Heart right ventricle (tissue), 16 donors: ENCODE measurements at regions of chr5 and their contacts with region 1.

Region 1: GRCh38 chr5:57499262-57500050 is 16.8 kb upstream of the ACTBL2 start:
- DNase-seq: peak in 1 of 2 donors; percentile 31
- ATAC-seq: peak in 7 of 8 donors; percentile 50 to 82 (median 68)
- H3K4me3 ChIP-seq: peak overlapping the region in 7 of 10 donors; percentile 8 to 41 (median 31)
- H3K27ac ChIP-seq: peak overlapping the region in 4 of 10 donors; percentile 0 to 70 (median 33)
- H3K4me1 ChIP-seq: peaks cover 0 to 49% (median 33%) of the 10 kb centered on the region in 9 donors
- H3K27me3 ChIP-seq: no peaks in the 10 kb centered on the region
- CTCF ChIP-seq: peak; percentile 59 to 87 (median 76)

Region 2: GRCh38 chr5:57298295-57298984 is 201.0 kb before region 1 on chr5:
- intact Hi-C with region 1: loop called in 9 of 10 experiments (anchors 2 to 10 kb)
- DNase-seq: peak; percentile 41 to 91
- ATAC-seq: peak; percentile 81 to 95 (median 92)
- H3K4me3 ChIP-seq: peak overlapping the region in 6 of 10 donors; percentile 0 to 37 (median 17)
- H3K27ac ChIP-seq: peak overlapping the region in 5 of 10 donors; percentile 18 to 58 (median 23)
- H3K4me1 ChIP-seq: peaks cover 3 to 13% (median 8%) of the 10 kb centered on the region in 9 donors
- H3K27me3 ChIP-seq: no peaks in the 10 kb centered on the region
- CTCF ChIP-seq: peak; percentile 74 to 89 (median 85)

Region 3: GRCh38 chr5:57435701-57436134 is 63.7 kb before region 1 on chr5:
- intact Hi-C with region 1: no loop called
- DNase-seq: no peak
- ATAC-seq: peak in 2 of 8 donors; percentile 46 to 51
- H3K4me3 ChIP-seq: no peak overlapping the region
- H3K27ac ChIP-seq: no peak overlapping the region
- H3K4me1 ChIP-seq: peaks cover 0 to 28% (median 4%) of the 10 kb centered on the region in 9 donors
- H3K27me3 ChIP-seq: no peaks in the 10 kb centered on the region
- CTCF ChIP-seq: no peak

Region 4: DNA sequence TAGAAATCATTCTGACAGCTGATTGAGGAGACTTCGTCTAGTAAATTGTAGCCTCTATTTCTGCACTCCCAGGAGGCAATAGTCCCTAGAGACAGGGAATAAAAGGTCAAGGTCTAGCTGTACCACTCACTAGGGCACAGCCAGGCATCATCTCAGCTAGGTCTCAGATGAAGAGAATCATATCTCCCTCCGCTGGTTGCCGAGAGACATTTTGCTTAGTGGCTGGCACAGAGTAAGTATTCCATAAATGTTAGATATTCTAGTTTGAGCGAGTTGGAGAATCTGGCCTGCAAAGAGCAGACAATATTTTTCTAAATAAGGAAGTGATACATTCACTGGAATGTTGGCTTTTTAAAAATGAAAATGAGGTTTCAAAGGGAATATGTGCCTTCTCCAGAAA is 163.5 kb after region 1 on chr5:
- intact Hi-C with region 1: loop called in 4 of 10 experiments (anchors 5 to 10 kb)
- DNase-seq: peak in 1 of 2 donors; percentile 45
- ATAC-seq: peak; percentile 80 to 95 (median 86)
- H3K4me3 ChIP-seq: no peak overlapping the region
- H3K27ac ChIP-seq: peak overlapping the region in 8 of 10 donors; percentile 24 to 89 (median 76)
- H3K4me1 ChIP-seq: peaks cover 0 to 30% (median 3%) of the 10 kb centered on the region in 9 donors
- H3K27me3 ChIP-seq: no peaks in the 10 kb centered on the region
- CTCF ChIP-seq: peak in 4 of 9 donors; percentile 5 to 40 (median 31)

Region 5: GRCh38 chr5:57692582-57693487 is 193.4 kb after region 1 on chr5:
- intact Hi-C with region 1: loop called in 2 of 10 experiments (anchors 10 kb)
- DNase-seq: peak; percentile 55 to 74
- ATAC-seq: peak; percentile 66 to 97 (median 82)
- H3K4me3 ChIP-seq: no peak overlapping the region
- H3K27ac ChIP-seq: peak overlapping the region in 9 of 10 donors; percentile 1 to 89 (median 70)
- H3K4me1 ChIP-seq: peaks cover 5 to 60% (median 40%) of the 10 kb centered on the region in 9 donors
- H3K27me3 ChIP-seq: no peaks in the 10 kb centered on the region
- CTCF ChIP-seq: no peak

Region 6: GRCh38 chr5:57761491-57761890 is 262.0 kb after region 1 on chr5:
- intact Hi-C with region 1: loop called in 1 of 10 experiments (anchors 10 kb)
- DNase-seq: no peak
- ATAC-seq: no peak
- H3K4me3 ChIP-seq: no peak overlapping the region
- H3K27ac ChIP-seq: no peak overlapping the region
- H3K4me1 ChIP-seq: no peaks in the 10 kb centered on the region
- H3K27me3 ChIP-seq: no peaks in the 10 kb centered on the region
- CTCF ChIP-seq: no peak

Region 7: DNA sequence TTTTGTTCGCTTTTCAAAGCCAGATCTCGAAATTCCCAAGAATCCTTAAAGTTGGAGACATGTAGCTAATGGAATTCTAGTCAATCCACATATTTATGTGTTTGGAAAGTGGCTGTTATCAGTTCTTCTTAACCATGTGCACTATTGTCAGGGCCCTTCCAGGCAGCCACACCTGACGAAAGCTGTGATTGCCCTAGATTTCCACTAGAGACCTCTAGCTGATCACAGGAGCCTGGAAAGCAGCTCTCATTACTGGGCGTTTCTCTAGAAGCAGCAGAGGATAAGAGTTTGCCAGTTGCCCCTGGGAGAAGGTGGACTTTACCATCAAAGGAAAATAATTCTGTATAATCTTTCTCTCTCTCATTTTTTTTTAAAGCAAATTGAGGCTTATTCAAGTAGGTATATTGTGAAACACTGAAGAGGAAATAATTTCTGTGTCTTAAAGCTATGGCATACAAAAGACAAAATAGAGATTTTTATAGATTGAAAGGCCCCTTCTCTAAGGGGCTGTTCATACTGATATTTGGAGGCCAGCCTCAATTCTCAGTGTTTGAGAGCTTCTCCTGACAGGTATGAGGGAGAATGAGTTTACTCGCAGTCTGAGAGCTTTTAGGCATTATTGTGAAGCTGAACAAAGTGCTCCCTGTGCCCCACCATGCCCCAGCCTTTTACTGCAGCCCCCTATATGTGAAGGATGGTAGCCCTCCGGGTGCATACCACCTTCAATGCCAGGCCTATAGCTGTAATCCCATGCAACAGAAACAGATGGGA is 388.6 kb after region 1 on chr5:
- intact Hi-C with region 1: loop called in 8 of 10 experiments (anchors 5 to 10 kb)
- DNase-seq: peak in 1 of 2 donors; percentile 69
- ATAC-seq: peak; percentile 89 to 93 (median 90)
- H3K4me3 ChIP-seq: no peak overlapping the region
- H3K27ac ChIP-seq: peak overlapping the region in 1 of 10 donors; percentile 8
- H3K4me1 ChIP-seq: peaks cover 0 to 32% (median 11%) of the 10 kb centered on the region in 9 donors
- H3K27me3 ChIP-seq: no peaks in the 10 kb centered on the region
- CTCF ChIP-seq: peak; percentile 42 to 82 (median 66)

Region 8: GRCh38 chr5:57903458-57903857 is 404.0 kb after region 1 on chr5:
- intact Hi-C with region 1: no loop called
- DNase-seq: no peak
- ATAC-seq: no peak
- H3K4me3 ChIP-seq: no peak overlapping the region
- H3K27ac ChIP-seq: no peak overlapping the region
- H3K4me1 ChIP-seq: peaks cover 0 to 29% (median 5%) of the 10 kb centered on the region in 9 donors
- H3K27me3 ChIP-seq: no peaks in the 10 kb centered on the region
- CTCF ChIP-seq: no peak